ENCODE measurements at regions of chr1 and their contacts with region 1.

Region 1: GRCh38 chr1:226424228-226425003 is 16.5 kb upstream of the PARP1 start:
- DNase-seq: peak; percentile 64
- H3K4me3 ChIP-seq: no peak overlapping the region; a peak in 1 of 4 replicates
- H3K27ac ChIP-seq: no peak overlapping the region
- H3K4me1 ChIP-seq: peaks cover 0 to 6% of the 10 kb centered on the region in 2 experiments; a peak in 2 of 4 replicates
- H3K27me3 ChIP-seq: no peaks in the 10 kb centered on the region
- CTCF ChIP-seq: peak; percentile 60
- EP300 ChIP-seq: no peak
- RAD21 ChIP-seq: peak; percentile 80

Region 2: DNA sequence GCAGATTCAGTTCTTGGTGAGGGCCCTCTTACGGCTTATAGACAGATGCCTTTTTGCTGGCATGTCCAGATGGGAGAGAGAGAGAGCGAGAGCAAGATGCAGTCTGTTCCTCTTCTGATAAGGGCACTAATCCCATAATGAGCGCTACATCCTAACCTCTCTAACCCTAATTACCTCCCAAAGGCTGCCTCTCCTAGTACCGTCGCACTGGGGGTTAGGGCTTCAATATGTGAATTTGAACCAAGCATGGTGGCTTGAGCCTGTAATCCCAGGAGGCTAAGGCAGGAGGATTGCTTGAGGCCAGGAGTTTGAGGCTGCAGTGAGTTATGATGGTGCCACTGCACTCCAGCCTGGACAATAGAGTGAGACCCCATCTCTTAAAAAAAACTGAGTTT is 414.8 kb before region 1 on chr1:
- CTCF ChIA-PET with region 1: no interaction called
- POLR2A ChIA-PET with region 1: no interaction called
- DNase-seq: no peak
- H3K4me3 ChIP-seq: no peak overlapping the region
- H3K27ac ChIP-seq: no peak overlapping the region
- H3K4me1 ChIP-seq: no peaks in the 10 kb centered on the region
- H3K27me3 ChIP-seq: no peaks in the 10 kb centered on the region; the same call in 1 of the 2 replicates
- CTCF ChIP-seq: no peak
- EP300 ChIP-seq: no peak
- RAD21 ChIP-seq: no peak

Region 3: DNA sequence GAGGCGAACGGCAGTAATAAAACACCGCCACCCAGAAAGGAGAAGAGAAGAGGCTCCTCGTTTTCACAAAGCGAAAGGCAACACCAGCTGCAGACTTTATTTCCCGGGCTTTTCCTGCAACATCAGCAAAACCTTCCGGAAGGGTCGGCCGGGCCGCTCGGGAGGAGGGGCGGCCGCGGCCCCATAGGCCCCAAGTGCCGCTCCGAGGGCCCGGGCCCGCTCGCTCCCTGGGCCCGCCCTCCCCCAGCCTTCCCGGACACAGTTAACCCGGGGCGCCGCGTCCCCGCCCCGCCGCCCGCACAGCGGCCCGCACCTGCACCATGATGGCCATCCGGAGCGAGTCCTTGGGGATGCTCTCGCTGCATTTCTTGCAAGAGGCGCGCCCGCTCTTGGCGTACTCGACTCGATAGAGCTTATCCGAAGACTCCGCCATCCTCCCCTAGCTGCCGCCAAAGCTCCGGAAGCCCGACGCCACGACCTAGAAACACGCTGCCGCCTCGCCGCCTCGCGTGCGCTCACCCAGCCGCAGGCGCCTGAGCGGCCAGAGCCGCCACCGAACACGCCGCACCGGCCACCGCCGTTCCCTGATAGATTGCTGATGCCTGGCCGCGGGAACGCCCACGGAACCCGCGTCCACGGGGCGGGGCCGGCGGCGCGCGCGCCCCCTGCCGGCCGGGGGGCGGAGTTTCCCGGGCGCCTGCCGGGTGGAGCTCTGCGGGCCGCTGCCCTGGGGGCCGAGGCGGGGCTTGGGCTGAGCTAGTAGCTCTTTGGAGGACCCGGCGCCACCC is 16.7 kb before region 1 on chr1 and contains the start of gene PARP1:
- CTCF ChIA-PET with region 1: interaction called, 82 read pairs
- POLR2A ChIA-PET with region 1: no interaction called
- DNase-seq: peak; percentile 99
- H3K4me3 ChIP-seq: peak within 1 kb of the TSS; percentile 58 to 79
- H3K27ac ChIP-seq: peak within 1 kb of the TSS; percentile 66 to 86
- H3K4me1 ChIP-seq: peaks cover 21 to 29% of the 10 kb centered on the region in 2 experiments; a peak in 3 of 4 replicates
- H3K27me3 ChIP-seq: no peaks in the 10 kb centered on the region
- CTCF ChIP-seq: peak; percentile 75
- EP300 ChIP-seq: 0 out of 4 replicates have a peak, but pooled peaks have one; percentile 8
- RAD21 ChIP-seq: no peak
- polyA plus RNA-seq, gene PARP1: 187 and 239 TPM in 2 replicates

Region 4: GRCh38 chr1:226438007-226438406 is 13.6 kb after region 1 on chr1:
- CTCF ChIA-PET with region 1: interaction called, 17 read pairs
- POLR2A ChIA-PET with region 1: no interaction called
- DNase-seq: no peak
- H3K4me3 ChIP-seq: no peak overlapping the region
- H3K27ac ChIP-seq: no peak overlapping the region
- H3K4me1 ChIP-seq: no peaks in the 10 kb centered on the region; a peak in 1 of 4 replicates
- H3K27me3 ChIP-seq: no peaks in the 10 kb centered on the region; the same call in 1 of the 2 replicates
- CTCF ChIP-seq: peak; percentile 28; the same call in 1 of the 2 replicates
- EP300 ChIP-seq: no peak
- RAD21 ChIP-seq: no peak

Region 5: DNA sequence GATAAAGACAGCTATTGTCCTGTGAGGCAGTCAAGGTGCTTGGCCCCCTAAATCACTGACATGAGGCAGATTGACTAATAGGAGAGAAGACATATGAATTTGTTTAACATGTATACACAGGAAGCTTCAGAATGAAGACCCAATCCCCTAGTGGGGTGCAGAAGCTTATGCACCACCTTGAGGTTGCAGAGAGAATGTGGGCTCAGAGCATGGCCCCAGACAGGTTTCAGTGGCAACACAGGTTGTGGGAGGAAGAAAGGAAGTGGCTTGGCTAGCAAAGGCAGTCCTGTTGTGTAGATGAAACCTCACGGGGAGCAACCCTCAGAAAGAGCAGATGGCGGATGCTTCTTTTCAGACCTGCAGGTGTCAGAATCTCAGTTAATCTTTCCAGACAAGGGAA is 20.5 kb after region 1 on chr1:
- CTCF ChIA-PET with region 1: interaction called, 17 read pairs
- POLR2A ChIA-PET with region 1: no interaction called
- DNase-seq: no peak
- H3K4me3 ChIP-seq: no peak overlapping the region
- H3K27ac ChIP-seq: no peak overlapping the region
- H3K4me1 ChIP-seq: no peaks in the 10 kb centered on the region
- H3K27me3 ChIP-seq: no peaks in the 10 kb centered on the region; the same call in 1 of the 2 replicates
- CTCF ChIP-seq: no peak
- EP300 ChIP-seq: no peak
- RAD21 ChIP-seq: no peak

Region 6: DNA sequence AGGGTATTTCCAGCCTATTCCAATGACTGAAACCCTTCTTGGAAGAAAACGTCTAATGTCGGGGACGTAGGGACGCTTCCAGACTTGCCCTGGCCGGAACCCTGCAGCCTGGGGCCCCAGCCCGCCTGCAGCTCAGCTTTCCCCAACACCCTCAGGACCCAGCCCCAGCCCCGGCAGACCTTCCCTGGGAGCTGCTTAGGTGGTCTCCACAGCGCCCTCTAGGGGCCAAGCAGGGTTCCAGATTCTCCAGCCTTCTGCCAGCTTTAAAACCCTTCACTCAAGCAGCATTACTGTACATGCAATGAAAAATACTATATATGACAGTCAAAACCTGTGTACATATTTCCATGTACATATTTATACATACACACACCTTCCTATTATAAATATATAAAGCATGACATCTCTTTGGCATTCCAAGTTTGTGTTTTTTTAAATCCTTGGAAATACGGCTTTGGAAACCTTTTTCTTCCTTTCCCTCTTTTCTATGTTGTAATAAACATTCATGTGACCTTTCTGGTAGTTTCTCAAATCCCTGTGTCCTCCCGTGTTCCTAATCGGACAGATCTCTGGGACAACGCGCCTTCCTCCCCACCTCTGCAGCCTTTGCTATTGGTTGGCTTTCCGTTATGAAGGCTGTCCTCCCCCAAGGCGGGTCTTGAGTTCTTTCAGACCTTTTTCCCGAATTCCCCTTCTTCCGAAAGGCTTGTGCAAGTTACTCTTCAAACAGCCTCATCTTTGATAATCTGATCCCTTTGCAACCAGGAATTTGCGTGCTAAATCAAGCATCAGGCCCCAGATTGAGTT is 184.5 kb after region 1 on chr1:
- CTCF ChIA-PET with region 1: interaction called, 70 read pairs
- POLR2A ChIA-PET with region 1: no interaction called
- DNase-seq: peak; percentile 84
- H3K4me3 ChIP-seq: no peak overlapping the region; a peak in 1 of 4 replicates
- H3K27ac ChIP-seq: no peak overlapping the region
- H3K4me1 ChIP-seq: no peaks in the 10 kb centered on the region; a peak in 1 of 4 replicates
- H3K27me3 ChIP-seq: no peaks in the 10 kb centered on the region; the same call in 1 of the 2 replicates
- CTCF ChIP-seq: peak; percentile 81
- EP300 ChIP-seq: no peak
- RAD21 ChIP-seq: peak; percentile 65

Measured in SK-N-SH (cell line).